Activated CD8-positive, alpha-beta T cell treated with anti-CD3 and anti-CD28 coated beads, Interleukin-2, amount 10 ng/mL, durations not matched to agents 7 days and 5 days (primary cell): ENCODE measurements at regions of chr13 and their contacts with region 1.

Region 1: DNA sequence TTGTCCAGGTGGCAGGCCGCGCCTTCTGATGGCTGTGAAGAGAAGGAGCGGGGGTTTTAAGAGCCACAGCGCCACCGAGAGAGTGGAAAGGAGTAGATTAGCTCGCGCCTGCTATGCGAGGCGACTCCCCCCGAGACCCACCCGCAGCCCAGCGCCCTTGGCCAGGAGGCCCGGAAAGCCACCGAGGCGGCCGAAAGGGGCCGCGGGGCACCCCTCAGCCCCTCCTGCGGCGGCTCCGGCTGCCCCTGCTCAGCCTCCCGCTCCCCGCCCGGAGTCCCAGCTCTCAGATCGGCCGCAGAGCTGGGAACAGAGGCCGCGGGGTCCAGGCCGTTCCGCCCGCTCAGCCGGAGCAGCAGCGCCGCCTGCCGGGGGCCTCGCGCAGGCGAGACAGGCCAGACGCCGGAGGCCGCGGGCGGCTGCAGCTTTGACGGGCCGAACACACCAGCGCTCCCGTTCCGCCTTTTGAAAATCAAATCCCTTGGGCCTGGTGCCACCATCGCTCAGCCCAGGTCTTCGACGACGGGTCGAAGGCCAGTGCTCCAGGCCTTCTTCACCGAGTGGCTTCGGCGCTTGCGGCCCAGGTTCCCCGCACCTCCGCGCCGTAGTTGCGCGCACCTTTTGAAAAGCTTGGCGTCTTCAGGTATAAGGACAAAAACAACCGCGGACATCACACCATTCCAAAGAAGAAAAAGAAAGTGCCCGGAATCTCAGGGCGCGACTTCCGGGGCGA is 15.3 kb downstream of the CDX2 start:
- DNase-seq: peak; percentile 63
- ATAC-seq: peak; percentile 96
- H3K4me3 Mint-ChIP-seq: peak overlapping the region; percentile 69
- H3K27ac Mint-ChIP-seq: no peak overlapping the region
- H3K4me1 Mint-ChIP-seq: peaks cover 19% of the 10 kb centered on the region
- H3K27me3 Mint-ChIP-seq: peaks cover 54% of the 10 kb centered on the region

Region 2: DNA sequence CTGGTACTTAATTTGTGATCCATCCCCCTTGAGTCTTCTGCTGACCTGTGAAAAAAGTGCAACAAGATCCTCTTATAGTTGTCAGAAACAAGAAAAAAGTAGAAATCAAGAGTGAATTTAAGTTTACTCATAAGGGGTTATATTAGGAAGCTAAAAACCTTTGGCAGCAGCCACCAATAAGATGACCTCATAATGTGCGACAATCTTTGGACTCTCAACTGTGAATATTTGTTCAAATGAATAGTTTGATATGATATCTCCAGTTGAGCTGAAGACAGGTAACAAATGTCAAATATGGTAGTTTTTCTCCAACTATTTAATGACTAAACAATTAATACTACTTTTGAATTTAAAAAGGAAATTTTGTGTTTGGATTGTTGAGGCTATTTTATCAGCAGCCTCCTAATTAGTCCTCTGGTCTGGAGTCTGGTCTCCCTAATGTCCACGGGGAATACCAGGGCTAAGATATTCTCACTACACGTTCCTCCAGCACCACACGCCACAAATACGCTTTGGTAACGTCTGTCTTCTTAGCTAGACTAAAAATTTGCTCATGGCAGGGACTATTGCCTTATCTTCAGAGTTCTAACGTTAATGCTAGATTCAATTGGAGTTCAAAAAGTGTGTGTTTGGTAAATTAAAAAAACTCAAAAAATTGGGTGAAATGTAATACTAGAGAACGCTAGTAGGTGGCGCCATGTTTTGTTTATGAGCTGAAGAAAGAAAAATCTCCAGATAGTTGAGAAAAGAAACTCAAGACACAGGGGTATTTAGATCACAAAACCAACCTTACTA is 85.0 kb before region 1 on chr13:
- CTCF ChIA-PET with region 1: interaction called, 13 read pairs
- POLR2A ChIA-PET with region 1: no interaction called
- DNase-seq: no peak
- ATAC-seq: no peak
- H3K4me3 Mint-ChIP-seq: no peak overlapping the region
- H3K27ac Mint-ChIP-seq: no peak overlapping the region
- H3K4me1 Mint-ChIP-seq: no peaks in the 10 kb centered on the region
- H3K27me3 Mint-ChIP-seq: peaks cover 16% of the 10 kb centered on the region

Region 3: GRCh38 chr13:27926644-27927434 is 27.0 kb before region 1 on chr13:
- CTCF ChIA-PET with region 1: interaction called, 13 read pairs
- POLR2A ChIA-PET with region 1: interaction called, 3 read pairs
- DNase-seq: no peak
- ATAC-seq: no peak
- H3K4me3 Mint-ChIP-seq: peak overlapping the region; percentile 8
- H3K27ac Mint-ChIP-seq: peak overlapping the region; percentile 34
- H3K4me1 Mint-ChIP-seq: peaks cover 13% of the 10 kb centered on the region
- H3K27me3 Mint-ChIP-seq: peaks cover 88% of the 10 kb centered on the region

Region 4: GRCh38 chr13:27981006-27981708 is 27.3 kb after region 1 on chr13:
- CTCF ChIA-PET with region 1: interaction called, 21 read pairs
- POLR2A ChIA-PET with region 1: interaction called, 4 read pairs
- DNase-seq: no peak
- ATAC-seq: no peak
- H3K4me3 Mint-ChIP-seq: no peak overlapping the region
- H3K27ac Mint-ChIP-seq: no peak overlapping the region
- H3K4me1 Mint-ChIP-seq: peaks cover 17% of the 10 kb centered on the region
- H3K27me3 Mint-ChIP-seq: peaks cover 65% of the 10 kb centered on the region